Activated naive CD4-positive, alpha-beta T cell treated with anti-CD3 and anti-CD28 coated beads for 36 hours (primary cell): ENCODE measurements at regions of chr17 and their contacts with region 1.

Region 1: DNA sequence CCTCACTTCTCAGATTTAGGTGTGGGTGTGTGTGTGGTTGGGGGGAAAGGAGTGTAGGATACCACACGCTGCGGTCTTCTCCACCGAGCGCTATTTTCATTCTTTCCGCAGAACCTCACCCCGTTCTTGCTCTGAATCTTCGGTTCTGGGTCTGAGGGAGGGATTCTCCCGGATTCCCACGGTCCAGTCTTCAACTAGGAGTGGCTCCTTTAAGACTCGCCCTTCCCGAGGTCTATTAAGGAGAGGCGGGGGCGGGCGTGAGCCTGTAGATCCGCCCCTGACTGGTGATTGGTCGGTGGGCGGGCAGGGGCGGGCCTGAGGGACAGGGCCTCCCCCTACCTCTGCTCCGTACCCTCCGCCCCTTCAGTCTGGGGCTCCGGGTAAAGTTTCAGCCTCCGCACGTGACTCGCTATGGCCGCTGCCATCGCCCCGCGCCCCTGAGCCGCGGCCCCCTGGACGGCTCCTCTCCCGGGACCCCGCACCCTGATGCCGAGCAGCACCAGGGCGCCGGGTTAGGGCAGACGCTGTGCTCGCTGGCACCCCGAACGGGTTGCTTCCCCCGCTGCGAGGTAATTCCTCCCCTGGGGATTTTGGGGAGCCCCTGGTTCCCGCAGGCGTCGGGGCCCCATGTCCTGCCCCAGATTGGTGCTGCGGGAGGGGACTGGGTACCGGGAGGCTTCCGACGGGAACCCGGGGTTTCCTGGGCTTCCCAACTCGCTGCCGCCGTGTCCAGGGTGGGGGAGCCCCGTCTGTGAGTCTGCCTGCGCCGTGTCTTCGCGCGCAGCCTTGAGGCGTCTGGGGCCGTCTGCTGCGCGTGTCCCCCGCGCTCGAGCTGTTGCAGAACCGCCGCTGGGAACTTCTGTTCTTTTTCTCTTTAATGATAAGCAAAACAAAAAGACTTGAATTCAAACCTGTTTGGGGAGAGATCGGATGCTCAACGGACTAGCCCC is 9.2 kb downstream of the RARA start:
- DNase-seq: peak; percentile 94
- H3K4me3 Mint-ChIP-seq: peak overlapping the region; percentile 85
- H3K27ac Mint-ChIP-seq: peak overlapping the region; percentile 90
- H3K4me1 Mint-ChIP-seq: peaks cover 75% of the 10 kb centered on the region
- H3K27me3 Mint-ChIP-seq: no peaks in the 10 kb centered on the region

Region 2: GRCh38 chr17:40287494-40288369 is 30.4 kb before region 1 on chr17 and contains the start of gene CDC6:
- CTCF ChIA-PET with region 1: interaction called, 4 read pairs
- intact Hi-C with region 1: loop called (anchors 1 kb)
- DNase-seq: peak; percentile 100
- H3K4me3 Mint-ChIP-seq: peak within 1 kb of the TSS; percentile 99
- H3K27ac Mint-ChIP-seq: peak within 1 kb of the TSS; percentile 94
- H3K4me1 Mint-ChIP-seq: peaks cover 47% of the 10 kb centered on the region
- H3K27me3 Mint-ChIP-seq: no peaks in the 10 kb centered on the region
- total RNA-seq, gene CDC6: 86.5 to 90.4 TPM

Region 3: DNA sequence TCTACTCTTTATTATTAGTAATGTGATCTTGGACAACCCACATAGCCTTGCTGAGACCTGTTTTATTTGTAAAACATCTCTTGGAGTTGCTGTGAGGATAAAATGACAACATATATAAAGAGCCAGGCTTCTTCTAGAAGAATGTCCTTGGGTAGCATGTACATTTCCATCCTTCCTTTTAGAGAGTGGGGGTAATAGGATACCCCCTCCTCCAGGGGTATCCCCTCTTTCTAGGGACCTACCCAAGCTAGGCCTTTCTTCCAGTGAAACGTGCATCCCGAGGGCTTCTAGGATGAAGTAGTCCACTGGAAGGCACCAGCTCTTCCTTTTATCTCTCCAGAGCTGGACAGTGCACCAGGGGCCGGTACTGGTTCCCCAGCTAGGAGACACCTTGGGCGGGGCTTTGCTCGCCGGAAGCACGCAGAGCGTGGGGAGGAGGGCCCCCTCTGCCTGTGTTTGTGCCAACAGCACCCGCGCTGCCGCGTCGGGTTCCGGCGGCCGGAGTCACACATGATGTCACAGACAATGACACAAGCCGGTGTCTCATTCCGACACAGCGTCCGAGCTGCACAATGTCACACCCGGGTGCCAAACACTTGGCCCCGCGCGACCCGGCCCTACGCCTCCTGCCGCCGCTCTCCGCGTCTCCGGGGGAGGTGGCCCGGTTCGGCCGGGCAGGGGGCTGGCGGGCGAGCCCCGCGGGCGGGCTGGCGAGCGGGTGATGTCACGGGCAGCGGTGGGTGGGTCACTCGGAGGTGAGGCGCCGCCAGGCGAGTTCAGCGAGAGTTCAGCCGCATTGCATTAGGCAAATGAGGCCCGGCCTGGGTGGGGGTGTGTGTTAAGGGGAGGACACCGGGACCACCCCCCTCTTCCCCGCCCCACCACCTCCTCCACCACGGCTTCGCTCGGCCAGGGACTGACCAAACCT is 23.0 kb after region 1 on chr17:
- CTCF ChIA-PET with region 1: interaction called, 11 read pairs
- intact Hi-C with region 1: loop called (anchors 1 kb)
- DNase-seq: peak; percentile 91
- H3K4me3 Mint-ChIP-seq: peak overlapping the region; percentile 38
- H3K27ac Mint-ChIP-seq: peak overlapping the region; percentile 61
- H3K4me1 Mint-ChIP-seq: peaks cover 71% of the 10 kb centered on the region
- H3K27me3 Mint-ChIP-seq: no peaks in the 10 kb centered on the region

Region 4: DNA sequence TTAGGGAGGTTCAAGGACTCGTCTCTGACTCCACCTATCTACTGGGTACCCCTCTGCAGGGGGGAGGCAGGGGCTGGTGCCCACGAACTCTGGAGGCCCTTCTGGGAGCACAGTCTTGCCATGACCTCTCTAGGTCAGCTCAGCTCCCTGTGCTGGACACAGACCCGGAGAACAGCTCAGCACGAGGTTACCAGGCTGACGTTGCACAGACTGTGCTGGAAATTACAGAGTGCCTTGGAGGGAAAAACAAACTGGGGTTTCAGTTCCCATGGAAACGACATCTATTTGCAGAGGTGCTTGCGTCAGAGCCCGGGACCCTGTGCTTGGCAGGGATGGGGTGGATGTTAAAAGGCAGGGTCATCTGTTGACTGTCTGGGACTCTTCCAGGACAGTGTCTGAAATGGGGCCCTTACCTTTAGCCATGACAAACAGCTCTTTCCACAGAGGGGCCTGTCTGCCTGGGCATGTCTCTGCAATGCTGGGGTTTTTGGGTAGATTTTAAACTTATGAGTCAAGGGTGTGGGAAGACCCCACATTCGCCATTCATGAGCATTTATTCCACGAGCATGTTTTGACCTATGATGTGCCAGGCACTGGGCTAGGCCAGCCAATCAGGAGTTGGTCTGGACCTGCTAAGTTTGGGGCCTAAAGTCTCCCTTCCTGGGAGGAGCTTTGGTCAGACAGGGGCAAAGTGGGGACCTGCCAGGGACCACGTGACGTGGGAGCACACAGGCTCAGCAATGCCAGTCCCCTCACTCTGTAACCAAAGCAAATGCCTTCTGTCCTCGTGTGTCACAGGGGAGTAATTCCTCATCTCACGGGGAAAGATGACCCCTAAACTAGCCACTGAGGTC is 224.6 kb after region 1 on chr17:
- CTCF ChIA-PET with region 1: interaction called, 3 read pairs
- intact Hi-C with region 1: loop called (anchors 2 kb)
- DNase-seq: peak; percentile 89
- H3K4me3 Mint-ChIP-seq: peak overlapping the region; percentile 66
- H3K27ac Mint-ChIP-seq: peak overlapping the region; percentile 96
- H3K4me1 Mint-ChIP-seq: peaks cover 83% of the 10 kb centered on the region
- H3K27me3 Mint-ChIP-seq: no peaks in the 10 kb centered on the region